CD8-positive, alpha-beta T cell (primary cell): ENCODE measurements at regions of chr12 and their contacts with region 1.

Region 1: DNA sequence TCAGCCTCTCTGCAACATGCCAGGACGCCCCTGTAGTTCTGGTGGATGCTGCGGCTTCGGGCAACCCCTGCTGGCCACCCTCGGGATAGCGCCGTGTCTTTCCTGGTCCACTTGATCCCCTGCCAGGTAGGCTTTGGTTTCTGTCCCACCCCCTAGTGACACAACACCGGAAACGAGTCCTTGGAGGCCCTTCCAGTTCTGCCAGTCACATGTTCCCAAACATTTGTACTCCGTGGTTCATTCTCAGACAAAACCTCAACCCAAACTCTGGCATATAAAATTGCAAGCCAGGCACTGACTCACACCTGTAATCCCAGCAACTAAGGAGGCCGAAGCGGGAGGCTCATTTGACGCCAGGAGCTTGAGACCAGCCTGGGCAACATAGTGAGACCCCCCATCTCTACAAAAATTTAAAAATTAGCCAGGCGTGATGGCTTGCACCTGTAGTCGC is 37.1 kb downstream of the RASAL1 start:
- DNase-seq: peak; percentile 35 to 78 (median 66)
- ATAC-seq: peak; percentile 93
- H3K4me3 ChIP-seq: no peak overlapping the region
- H3K4me3 Mint-ChIP-seq: no peak overlapping the region
- H3K27ac ChIP-seq: no peak overlapping the region
- H3K27ac Mint-ChIP-seq: peak overlapping the region; percentile 18
- H3K4me1 ChIP-seq: peaks cover 9% of the 10 kb centered on the region
- H3K4me1 Mint-ChIP-seq: peaks cover 13% of the 10 kb centered on the region
- H3K27me3 ChIP-seq: no peaks in the 10 kb centered on the region
- H3K27me3 Mint-ChIP-seq: no peaks in the 10 kb centered on the region
- CTCF ChIP-seq: peak; percentile 93

Region 2: DNA sequence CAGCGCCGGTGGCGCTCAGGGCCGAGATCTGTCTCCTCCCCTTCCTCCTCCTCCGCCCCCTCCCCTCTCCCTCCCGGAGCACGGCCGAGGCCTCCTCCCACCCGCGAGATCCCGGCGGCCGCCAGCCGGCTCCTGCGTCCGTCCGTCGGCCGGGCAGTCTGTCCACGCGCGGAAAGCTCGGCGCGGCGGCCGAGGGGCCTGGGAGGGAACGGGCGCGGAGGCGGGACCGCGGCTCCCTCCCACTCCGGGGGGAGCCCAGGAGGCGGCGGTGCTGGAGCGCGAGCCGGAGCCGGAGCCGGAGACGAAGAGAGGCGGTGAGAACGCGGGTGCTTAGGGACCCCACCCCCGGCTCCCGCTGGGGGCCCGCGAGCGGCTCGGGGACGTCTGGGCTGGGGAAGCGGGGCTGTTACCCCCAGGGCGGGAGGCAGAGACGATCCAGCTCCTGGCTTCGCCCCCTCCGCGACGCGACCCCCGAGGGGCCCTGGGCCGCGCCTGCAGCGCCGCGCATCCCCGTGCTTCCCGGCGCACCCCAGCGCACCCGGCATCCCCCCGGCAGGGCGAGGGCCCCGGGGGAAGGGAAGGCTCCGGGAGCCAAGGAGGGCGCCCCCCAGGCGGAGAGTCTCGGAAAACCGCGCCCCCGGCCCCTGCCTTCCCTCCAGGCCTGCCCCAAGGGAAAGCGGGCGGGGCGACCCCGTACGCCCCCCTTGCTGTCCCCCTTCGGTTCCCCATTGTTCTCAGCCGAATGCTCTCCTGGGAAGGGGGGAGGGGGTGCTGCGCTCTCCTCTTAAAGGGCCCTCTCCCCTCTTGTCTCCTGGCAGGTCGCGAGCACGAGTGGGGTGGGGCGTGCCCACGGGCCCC is 41.6 kb before region 1 on chr12 and contains the start of gene DTX1:
- CTCF ChIA-PET with region 1: interaction called, 113 read pairs
- POLR2A ChIA-PET with region 1: interaction called, 3 read pairs
- intact Hi-C with region 1: loop called in 1 of 2 experiments (anchors 2 kb)
- DNase-seq: peak in 6 of 9 experiments; percentile 20 to 57 (median 42)
- ATAC-seq: peak; percentile 75
- H3K4me3 ChIP-seq: peak within 1 kb of the TSS; percentile 52 to 57
- H3K4me3 Mint-ChIP-seq: peak within 1 kb of the TSS; percentile 83
- H3K27ac ChIP-seq: no peak within 1 kb of the TSS
- H3K27ac Mint-ChIP-seq: peak within 1 kb of the TSS; percentile 57
- H3K4me1 ChIP-seq: peaks cover 23% of the 10 kb centered on the region
- H3K4me1 Mint-ChIP-seq: peaks cover 27% of the 10 kb centered on the region
- H3K27me3 ChIP-seq: no peaks in the 10 kb centered on the region
- H3K27me3 Mint-ChIP-seq: no peaks in the 10 kb centered on the region
- CTCF ChIP-seq: no peak
- total RNA-seq, gene DTX1: 4.6 to 4.7 TPM

Region 3: DNA sequence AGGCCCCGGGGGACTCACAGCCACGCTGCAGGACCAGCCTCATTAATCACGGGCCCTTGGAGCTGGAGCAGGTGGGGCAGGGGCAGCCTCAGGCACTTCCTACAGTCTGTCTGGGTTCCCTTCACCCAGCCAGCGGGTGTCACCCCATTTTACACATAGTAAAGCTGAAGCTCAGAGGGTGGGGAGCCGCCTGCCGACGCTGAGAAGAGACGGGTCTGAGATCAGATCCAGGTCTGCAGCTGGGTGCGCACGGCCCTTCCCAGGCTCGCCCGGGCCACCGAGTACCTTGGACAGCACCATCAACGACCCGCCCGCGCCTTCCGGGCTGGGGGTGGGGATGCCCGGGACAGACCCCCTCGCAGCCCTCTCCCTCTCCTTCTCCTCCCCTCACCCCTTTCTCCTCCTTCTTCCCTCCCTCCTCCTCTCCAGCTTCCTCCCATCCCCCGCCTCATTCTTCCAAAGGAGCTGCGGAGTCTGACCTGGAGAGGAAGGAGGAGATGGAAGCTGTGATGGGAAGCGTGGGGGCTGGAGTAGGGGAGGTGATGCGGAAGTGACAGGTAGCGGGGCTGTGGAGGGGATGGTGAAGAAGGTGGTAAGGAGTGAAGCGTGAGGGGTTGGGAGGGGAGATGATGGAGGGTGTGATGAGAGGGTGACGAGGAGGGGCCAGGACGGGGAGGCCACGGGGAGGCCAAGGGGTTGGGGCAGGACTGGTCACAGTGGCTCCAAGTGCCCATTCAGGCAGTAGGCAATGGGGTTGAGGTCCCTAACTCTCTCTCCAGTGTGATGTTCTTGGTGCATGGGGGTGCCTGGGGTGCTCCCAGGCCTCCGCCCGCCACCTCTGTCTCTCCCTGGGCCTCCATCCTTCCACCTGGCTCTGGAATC is 33.1 kb before region 1 on chr12:
- CTCF ChIA-PET with region 1: interaction called, 12 read pairs
- POLR2A ChIA-PET with region 1: no interaction called
- intact Hi-C with region 1: no loop called
- DNase-seq: no peak
- ATAC-seq: no peak
- H3K4me3 ChIP-seq: no peak overlapping the region
- H3K4me3 Mint-ChIP-seq: no peak overlapping the region
- H3K27ac ChIP-seq: no peak overlapping the region
- H3K27ac Mint-ChIP-seq: no peak overlapping the region
- H3K4me1 ChIP-seq: peaks cover 13% of the 10 kb centered on the region
- H3K4me1 Mint-ChIP-seq: peaks cover 39% of the 10 kb centered on the region
- H3K27me3 ChIP-seq: no peaks in the 10 kb centered on the region
- H3K27me3 Mint-ChIP-seq: no peaks in the 10 kb centered on the region
- CTCF ChIP-seq: no peak